ENCODE measurements at regions of chr1 and their contacts with region 1.

Region 1: DNA sequence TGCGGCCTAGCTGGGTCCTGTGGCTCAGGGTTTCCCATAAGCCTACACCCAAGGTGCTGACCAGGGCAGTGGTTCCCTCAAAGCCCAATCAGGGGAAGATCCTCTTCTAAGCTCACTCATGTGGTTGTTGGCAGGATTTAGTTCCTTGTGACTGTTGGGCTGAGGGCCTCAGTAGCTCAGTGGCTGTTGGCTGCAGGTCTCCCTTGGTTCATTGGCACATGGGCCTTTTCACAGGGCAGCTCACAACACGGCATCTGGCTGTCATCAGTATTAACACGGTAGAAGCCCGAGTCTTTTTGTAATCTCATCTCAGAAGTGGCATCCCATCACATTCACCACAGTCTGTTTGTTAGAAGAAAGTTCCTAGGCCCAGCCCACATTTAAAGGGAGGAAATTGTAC is 188.2 kb upstream of the HMCN1 start:
- DNase-seq: no peak
- ATAC-seq: no peak
- H3K4me3 Mint-ChIP-seq: no peak overlapping the region
- H3K27ac Mint-ChIP-seq: no peak overlapping the region
- H3K4me1 Mint-ChIP-seq: no peaks in the 10 kb centered on the region
- H3K27me3 Mint-ChIP-seq: no peaks in the 10 kb centered on the region

Region 2: DNA sequence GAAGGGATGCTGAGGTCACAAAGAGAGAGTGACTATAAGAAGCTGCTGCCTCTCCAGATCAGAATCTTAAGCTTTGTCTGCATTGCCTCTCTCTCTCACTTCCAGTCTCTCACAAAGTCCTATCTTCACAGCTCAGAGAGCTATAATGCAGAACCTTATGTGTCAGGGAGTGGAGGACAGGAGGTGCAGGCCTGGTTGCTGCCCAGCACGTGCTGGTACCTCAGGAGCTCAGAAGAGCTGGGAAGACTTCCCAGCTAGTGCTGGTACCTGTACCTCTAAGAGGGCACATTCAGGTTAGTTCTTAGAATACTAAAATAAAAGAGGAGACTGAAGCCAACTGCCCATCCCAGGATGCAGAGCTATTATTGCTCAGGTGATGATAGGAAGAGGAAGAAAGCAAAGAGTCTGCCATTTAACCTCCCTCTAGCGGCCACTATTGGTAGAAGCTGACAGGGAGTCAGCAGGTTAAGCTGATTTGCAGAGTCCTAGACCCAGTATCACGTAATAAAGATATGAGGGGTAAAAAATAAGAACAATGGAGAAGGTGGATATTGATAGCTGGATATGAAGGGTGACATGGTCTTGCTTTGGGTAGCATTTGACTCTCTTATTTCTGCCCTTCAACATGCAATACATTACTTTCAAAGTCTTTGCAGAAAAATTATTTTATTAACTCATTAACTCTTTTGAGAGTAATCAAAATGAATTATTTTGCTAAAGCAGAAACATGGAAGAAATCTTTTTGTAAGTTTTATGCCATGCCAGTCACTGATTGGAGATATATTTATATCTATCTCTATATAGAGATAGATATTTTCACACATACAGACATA is 50.0 kb after region 1 on chr1:
- CTCF ChIA-PET with region 1: interaction called, 10 read pairs
- POLR2A ChIA-PET with region 1: no interaction called
- intact Hi-C with region 1: no loop called
- DNase-seq: peak; percentile 61
- ATAC-seq: peak; percentile 75
- H3K4me3 Mint-ChIP-seq: no peak overlapping the region
- H3K27ac Mint-ChIP-seq: no peak overlapping the region
- H3K4me1 Mint-ChIP-seq: peaks cover 10% of the 10 kb centered on the region
- H3K27me3 Mint-ChIP-seq: no peaks in the 10 kb centered on the region

Measured in activated CD4-positive, alpha-beta T cell treated with anti-CD3 and anti-CD28 coated beads for 36 hours (primary cell).